Pancreas (tissue), 10 donors: ENCODE measurements at regions of chr2 and their contacts with region 1.

Region 1: GRCh38 chr2:64859312-64860212 is 129.6 kb upstream of the SLC1A4 start:
- DNase-seq: peak; percentile 83 to 95 (median 90)
- ATAC-seq: peak; percentile 86 to 91 (median 88)
- H3K4me3 ChIP-seq: peak overlapping the region; percentile 7 to 55 (median 44)
- H3K27ac ChIP-seq: peak overlapping the region; percentile 78 to 94 (median 88)
- H3K4me1 ChIP-seq: peaks cover 8 to 21% (median 9%) of the 10 kb centered on the region in 3 donors
- H3K27me3 ChIP-seq: no peaks in the 10 kb centered on the region
- CTCF ChIP-seq: no peak

Region 2: GRCh38 chr2:64601034-64601754 is 258.4 kb before region 1 on chr2:
- intact Hi-C with region 1: loop called in 1 of 3 experiments (anchors 5 kb)
- DNase-seq: no peak
- ATAC-seq: no peak
- H3K4me3 ChIP-seq: no peak overlapping the region
- H3K27ac ChIP-seq: no peak overlapping the region
- H3K4me1 ChIP-seq: peaks cover 0 to 5% (median 4%) of the 10 kb centered on the region in 3 donors
- H3K27me3 ChIP-seq: no peaks in the 10 kb centered on the region
- CTCF ChIP-seq: no peak

Region 3: GRCh38 chr2:64653349-64654062 is 206.1 kb before region 1 on chr2 and contains the start of gene SERTAD2:
- intact Hi-C with region 1: loop called in 1 of 3 experiments (anchors 5 kb)
- DNase-seq: peak; percentile 88 to 95 (median 90)
- ATAC-seq: peak; percentile 82 to 88 (median 86)
- H3K4me3 ChIP-seq: peak within 1 kb of the TSS; percentile 57 to 92 (median 83)
- H3K27ac ChIP-seq: peak within 1 kb of the TSS; percentile 97 to 100 (median 98)
- H3K4me1 ChIP-seq: peaks cover 12 to 42% (median 41%) of the 10 kb centered on the region in 3 donors
- H3K27me3 ChIP-seq: no peaks in the 10 kb centered on the region
- CTCF ChIP-seq: no peak
- total RNA-seq, gene SERTAD2: 3.1 to 9.4 (median 4.7) TPM

Region 4: DNA sequence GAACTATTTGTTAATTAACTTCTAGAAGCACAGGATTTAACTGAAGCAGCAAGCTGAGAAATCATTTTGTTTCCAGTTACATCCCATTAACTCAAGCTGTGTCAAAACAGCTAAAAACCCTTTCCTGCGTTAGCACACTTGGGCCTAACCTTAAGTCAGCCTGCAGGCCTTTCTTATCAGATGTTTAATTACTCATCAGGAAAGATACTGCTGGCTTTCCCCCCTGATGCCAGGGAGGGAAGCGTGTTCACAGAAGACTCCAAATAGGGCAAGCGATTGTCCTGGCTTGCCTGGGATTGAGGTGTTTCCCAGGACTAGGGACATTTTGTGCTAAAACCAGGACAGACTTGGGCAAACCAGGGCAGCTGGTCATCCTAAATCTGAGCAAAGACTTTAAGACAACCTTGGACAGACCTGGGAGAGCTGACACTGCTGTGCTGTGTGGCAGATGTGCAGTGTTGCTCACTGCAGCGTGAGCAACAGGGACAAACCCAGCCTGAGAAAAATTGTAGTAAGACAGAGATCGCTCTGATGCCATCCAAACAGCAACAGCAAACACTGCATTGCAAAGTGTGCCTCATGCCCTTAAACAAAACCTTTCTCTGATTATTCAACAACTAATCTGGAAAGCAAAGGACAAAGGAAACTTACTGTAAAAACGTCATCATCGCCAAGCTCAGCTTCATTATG is 471.9 kb after region 1 on chr2:
- intact Hi-C with region 1: no loop called
- DNase-seq: no peak
- ATAC-seq: no peak
- H3K4me3 ChIP-seq: no peak overlapping the region
- H3K27ac ChIP-seq: no peak overlapping the region
- H3K4me1 ChIP-seq: no peaks in the 10 kb centered on the region
- H3K27me3 ChIP-seq: no peaks in the 10 kb centered on the region
- CTCF ChIP-seq: no peak